Heart left ventricle (tissue), 16 donors: ENCODE measurements at regions of chr1 and their contacts with region 1.

Region 1: GRCh38 chr1:3900119-3900968 is at the start of gene C1orf174:
- DNase-seq: peak; percentile 96 to 97 (median 97)
- ATAC-seq: peak; percentile 91 to 93 (median 92)
- H3K4me3 ChIP-seq: peak within 1 kb of the TSS; percentile 62 to 98 (median 88)
- H3K27ac ChIP-seq: peak within 1 kb of the TSS; percentile 93 to 100 (median 98)
- H3K4me1 ChIP-seq: peaks cover 0 to 15% (median 8%) of the 10 kb centered on the region in 12 donors
- H3K27me3 ChIP-seq: no peaks in the 10 kb centered on the region
- CTCF ChIP-seq: peak in 1 of 12 donors; percentile 6
- POLR2A ChIP-seq: peak in 1 of 2 donors; percentile 50
- total RNA-seq, gene C1orf174: 8.7 to 16.4 (median 11.3) TPM

Region 2: DNA sequence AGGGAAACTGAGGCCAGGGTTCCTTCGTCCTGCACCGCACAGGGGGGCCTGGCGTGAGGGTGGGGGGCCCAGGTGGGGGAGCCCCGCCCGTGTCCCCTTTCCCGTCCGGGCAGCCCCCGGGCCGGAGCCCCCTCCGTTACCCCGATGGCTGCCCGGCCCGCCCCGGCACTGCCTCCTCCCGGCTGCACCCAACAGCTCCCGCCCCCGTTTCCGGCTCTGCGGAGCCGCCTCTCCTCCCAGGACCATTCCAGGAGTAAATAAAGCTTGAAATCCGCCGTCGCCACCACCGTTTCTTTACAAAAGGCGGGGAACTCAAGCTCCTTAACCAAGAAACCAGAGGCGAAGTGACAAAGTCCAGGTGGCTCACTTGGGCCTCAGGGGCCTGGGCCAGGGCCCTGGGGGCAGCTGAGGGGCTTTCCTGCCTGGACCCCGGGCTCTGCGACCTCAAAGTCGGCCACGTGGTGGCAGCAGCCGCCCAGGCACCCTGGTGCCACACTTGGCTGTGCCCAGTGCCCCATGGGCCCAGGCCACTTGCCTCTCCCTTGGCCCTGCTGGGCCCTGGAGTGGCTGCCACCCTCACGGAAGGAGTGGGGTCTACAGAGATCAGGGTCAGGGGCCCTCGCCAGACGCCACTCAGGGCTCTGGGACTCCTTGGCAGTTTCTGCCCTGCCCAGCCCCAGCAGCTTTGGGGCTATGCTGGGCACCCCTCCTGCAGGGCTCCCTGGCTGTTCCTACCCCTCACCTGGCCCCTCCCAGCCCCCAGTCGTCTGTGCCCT is 1705.3 kb before region 1 on chr1:
- intact Hi-C with region 1: loop called in 1 of 10 experiments (anchors 10 kb)
- DNase-seq: peak; percentile 92 to 95 (median 94)
- ATAC-seq: peak; percentile 62 to 79 (median 76)
- H3K4me3 ChIP-seq: peak overlapping the region; percentile 51 to 88 (median 73)
- H3K27ac ChIP-seq: peak overlapping the region; percentile 82 to 98 (median 95)
- H3K4me1 ChIP-seq: peaks cover 6 to 67% (median 54%) of the 10 kb centered on the region in 12 donors
- H3K27me3 ChIP-seq: no peaks in the 10 kb centered on the region
- CTCF ChIP-seq: peak; percentile 85 to 98 (median 96)
- POLR2A ChIP-seq: peak in 1 of 2 donors; percentile 31

Region 3: DNA sequence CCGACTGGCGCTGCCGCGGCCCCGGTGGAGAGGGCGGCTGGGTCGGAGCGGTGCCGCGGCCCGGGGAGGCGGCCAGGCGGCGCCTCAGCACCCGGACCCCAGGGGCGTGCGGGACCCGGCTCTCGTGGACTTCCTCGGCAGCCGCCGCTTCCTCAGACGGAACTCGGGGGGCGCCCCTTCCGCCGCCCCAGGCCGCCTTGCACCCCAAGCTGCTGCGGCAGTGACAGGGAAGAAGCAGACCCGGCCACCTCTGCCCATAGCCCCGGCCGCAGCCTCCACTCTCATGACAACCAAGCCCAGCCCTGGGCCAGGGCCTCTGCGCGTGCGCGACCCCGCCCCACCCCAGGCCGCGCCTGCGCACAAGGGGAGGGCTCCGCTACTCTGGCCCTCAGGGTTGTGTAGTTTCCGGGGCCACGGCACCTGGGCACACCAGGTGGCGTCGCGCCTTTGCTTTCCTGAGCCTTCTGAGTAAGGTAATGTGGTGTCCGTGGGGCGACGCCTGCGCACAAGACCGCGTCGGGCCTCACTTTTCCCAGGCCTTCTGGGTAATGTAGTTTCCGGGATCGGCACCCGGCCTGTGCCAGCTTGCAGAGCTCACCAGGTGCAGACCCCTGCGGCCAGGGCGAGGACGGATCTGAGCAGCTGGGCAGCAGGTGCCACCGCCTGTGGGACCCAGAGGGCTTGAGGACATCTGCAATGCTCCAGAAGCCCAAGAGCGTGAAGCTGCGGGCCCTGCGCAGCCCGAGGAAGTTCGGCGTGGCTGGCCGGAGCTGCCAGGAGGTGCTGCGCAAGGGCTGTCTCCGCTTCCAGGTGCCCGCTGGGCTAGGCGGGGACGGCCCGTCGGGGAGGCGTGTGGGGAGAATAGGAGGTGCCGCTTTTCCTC is 43.2 kb before region 1 on chr1 and contains the starts of genes CEP104 and DFFB:
- intact Hi-C with region 1: loop called in 2 of 10 experiments (anchors 2 kb)
- DNase-seq: peak; percentile 83 to 94 (median 90)
- ATAC-seq: peak; percentile 89 to 98 (median 96)
- H3K4me3 ChIP-seq: peak within 1 kb of the TSS; percentile 64 to 99 (median 90)
- H3K27ac ChIP-seq: peak within 1 kb of the TSS; percentile 25 to 85 (median 78)
- H3K4me1 ChIP-seq: peaks cover 0 to 27% (median 19%) of the 10 kb centered on the region in 12 donors
- H3K27me3 ChIP-seq: no peaks in the 10 kb centered on the region
- CTCF ChIP-seq: peak in 3 of 12 donors; percentile 7 to 39 (median 12)
- POLR2A ChIP-seq: peak in 1 of 2 donors; percentile 79
- total RNA-seq, gene CEP104: 22.2 to 46.1 (median 33.4) TPM
- total RNA-seq, gene DFFB: 1.3 to 5.8 (median 2.6) TPM